ENCODE measurements at regions of chr6 and their contacts with region 1.

Region 1: GRCh38 chr6:34696739-34697543 is at the start of gene ILRUN:
- DNase-seq: peak; percentile 97
- ATAC-seq: peak; percentile 89
- H3K4me3 Mint-ChIP-seq: peak within 1 kb of the TSS; percentile 93
- H3K27ac Mint-ChIP-seq: peak within 1 kb of the TSS; percentile 96
- H3K4me1 Mint-ChIP-seq: peaks cover 39% of the 10 kb centered on the region
- H3K27me3 Mint-ChIP-seq: peaks cover 2% of the 10 kb centered on the region
- total RNA-seq, gene ILRUN: 57.4 to 58.8 TPM

Region 2: DNA sequence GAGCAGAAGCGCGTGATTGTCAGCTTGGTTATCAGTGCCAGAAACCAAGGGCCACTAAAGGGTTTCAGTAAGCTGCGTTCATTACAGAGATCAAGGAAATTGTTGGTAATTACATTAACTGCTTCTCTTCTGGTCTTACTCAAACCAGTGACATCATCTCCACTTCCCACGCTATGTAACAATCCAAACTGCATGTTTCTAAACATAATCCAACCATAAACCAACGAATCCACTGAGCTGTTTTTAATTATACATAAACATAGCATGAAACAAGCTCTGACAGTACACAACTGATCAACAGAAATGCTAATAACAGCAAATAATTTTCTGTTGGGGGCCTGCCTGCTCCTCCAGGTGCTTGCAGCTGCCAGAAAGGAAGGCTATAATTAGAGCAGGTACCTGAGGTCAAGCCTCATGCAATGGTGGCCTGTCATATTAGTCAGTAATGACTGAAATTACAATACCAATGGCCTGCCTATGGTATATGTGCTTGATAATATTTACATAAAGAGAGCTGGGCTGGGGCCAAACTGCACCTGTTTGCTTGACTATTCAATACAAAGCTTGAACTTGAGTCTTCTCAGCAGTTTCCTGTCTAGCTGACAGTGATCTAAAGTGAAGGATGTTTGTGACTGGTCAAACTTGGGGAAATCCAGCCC is 40.4 kb before region 1 on chr6:
- CTCF ChIA-PET with region 1: no interaction called
- POLR2A ChIA-PET with region 1: interaction called, 20 read pairs
- DNase-seq: peak; percentile 41
- ATAC-seq: peak; percentile 72
- H3K4me3 Mint-ChIP-seq: peak overlapping the region; percentile 76
- H3K27ac Mint-ChIP-seq: peak overlapping the region; percentile 90
- H3K4me1 Mint-ChIP-seq: peaks cover 42% of the 10 kb centered on the region
- H3K27me3 Mint-ChIP-seq: no peaks in the 10 kb centered on the region

Region 3: GRCh38 chr6:34671801-34672656 is 24.9 kb before region 1 on chr6:
- CTCF ChIA-PET with region 1: no interaction called
- POLR2A ChIA-PET with region 1: interaction called, 15 read pairs
- DNase-seq: peak; percentile 87
- ATAC-seq: peak; percentile 99
- H3K4me3 Mint-ChIP-seq: peak overlapping the region; percentile 65
- H3K27ac Mint-ChIP-seq: peak overlapping the region; percentile 96
- H3K4me1 Mint-ChIP-seq: peaks cover 47% of the 10 kb centered on the region
- H3K27me3 Mint-ChIP-seq: no peaks in the 10 kb centered on the region

Measured in activated CD8-positive, alpha-beta T cell treated with anti-CD3 and anti-CD28 coated beads, Interleukin-2, amount 10 ng/mL, durations not matched to agents 7 days and 5 days (primary cell).